ENCODE measurements at regions of chr3 and their contacts with region 1.

Region 1: DNA sequence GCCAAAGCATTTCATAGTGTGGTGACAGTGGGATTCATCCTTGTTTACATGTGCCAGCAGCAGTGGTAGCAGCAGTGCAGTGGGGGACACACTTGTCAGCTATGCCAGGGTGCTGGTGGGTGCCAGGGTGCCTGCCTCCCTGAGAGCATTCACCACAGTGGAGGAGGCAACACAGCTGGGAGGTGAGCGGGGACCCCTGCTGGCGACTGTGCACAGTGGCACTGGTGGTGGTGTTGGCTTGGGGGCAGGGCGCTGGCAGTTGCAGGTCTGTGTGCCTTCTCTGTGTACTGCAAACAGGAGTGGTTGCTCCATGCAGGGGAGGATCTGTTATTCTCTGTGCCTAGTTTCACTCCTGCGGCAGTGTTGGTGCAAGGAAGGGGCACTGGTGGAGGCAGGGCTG is 41.2 kb downstream of the CEP63 start:
- DNase-seq: peak in 1 of 9 experiments; percentile 7
- ATAC-seq: no peak
- H3K4me3 ChIP-seq: no peak overlapping the region
- H3K4me3 Mint-ChIP-seq: no peak overlapping the region
- H3K27ac ChIP-seq: no peak overlapping the region
- H3K27ac Mint-ChIP-seq: no peak overlapping the region
- H3K4me1 ChIP-seq: no peaks in the 10 kb centered on the region
- H3K4me1 Mint-ChIP-seq: peaks cover 8% of the 10 kb centered on the region
- H3K27me3 ChIP-seq: no peaks in the 10 kb centered on the region
- H3K27me3 Mint-ChIP-seq: no peaks in the 10 kb centered on the region
- CTCF ChIP-seq: no peak

Region 2: DNA sequence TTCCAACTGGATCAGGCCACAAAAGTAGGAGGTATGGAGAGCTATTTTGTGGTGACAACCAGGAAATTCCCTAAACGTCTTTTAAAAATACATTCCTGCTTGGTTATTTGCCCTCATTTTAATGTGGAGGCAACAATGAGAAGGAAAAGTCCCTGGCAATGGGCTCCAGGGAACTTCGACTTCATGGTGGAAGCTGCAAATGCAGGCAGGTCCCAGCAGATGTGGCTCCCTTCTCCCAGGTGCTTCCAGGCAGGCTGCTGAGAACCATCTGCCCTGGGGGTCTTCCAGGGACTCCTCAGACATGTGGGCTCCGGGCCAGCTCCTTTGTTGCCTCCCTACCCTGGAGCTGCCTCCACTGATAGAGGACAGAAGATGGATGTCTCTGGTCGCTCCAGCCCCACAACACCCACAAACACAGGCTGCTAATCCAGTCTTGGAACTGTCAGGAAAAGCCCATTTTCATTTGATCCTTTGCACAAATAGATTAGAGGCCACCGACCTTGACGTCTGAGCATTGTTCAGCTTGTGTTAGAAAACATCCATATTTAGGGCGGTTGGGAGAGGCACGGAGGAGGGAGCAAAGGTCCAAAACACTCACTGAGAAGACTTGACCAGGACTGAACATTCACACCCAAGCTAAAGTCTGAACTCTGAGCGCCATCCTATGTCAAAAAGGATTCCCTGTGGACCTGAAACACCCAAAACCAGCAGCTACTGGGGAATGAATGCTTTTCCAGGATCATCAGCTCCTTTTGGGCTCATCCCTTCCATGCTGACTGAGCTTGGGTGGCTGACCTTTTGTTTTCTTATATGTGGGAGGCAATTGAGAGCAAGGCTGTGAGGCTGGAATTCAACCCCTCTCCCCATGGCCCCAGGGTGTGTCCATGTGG is 467.1 kb before region 1 on chr3:
- CTCF ChIA-PET with region 1: no interaction called
- POLR2A ChIA-PET with region 1: no interaction called
- intact Hi-C with region 1: loop called in 1 of 2 experiments (anchors 5 kb)
- DNase-seq: no peak
- ATAC-seq: no peak
- H3K4me3 ChIP-seq: no peak overlapping the region
- H3K4me3 Mint-ChIP-seq: no peak overlapping the region
- H3K27ac ChIP-seq: no peak overlapping the region
- H3K27ac Mint-ChIP-seq: no peak overlapping the region
- H3K4me1 ChIP-seq: no peaks in the 10 kb centered on the region
- H3K4me1 Mint-ChIP-seq: peaks cover 4% of the 10 kb centered on the region
- H3K27me3 ChIP-seq: no peaks in the 10 kb centered on the region
- H3K27me3 Mint-ChIP-seq: peaks cover 2% of the 10 kb centered on the region
- CTCF ChIP-seq: no peak

Region 3: DNA sequence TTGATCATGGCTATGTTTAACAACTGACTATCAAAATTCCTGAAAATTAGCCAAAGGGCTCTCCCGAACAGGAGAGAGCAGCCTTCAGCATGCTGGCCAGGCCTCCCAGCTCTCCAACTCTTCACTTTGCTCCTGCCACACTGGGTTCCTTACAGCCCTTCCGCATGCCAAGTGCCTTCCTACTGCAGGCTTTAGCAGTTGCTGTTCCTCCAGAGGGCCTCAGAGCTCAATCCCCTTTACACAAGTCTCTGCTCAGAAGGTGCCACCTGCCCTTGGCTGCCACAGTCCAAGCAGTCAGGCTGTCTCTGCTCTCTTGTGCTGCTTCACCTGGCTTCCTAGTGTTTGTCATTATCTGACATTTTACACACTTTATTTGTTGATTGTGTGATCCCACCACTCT is 885.4 kb after region 1 on chr3:
- CTCF ChIA-PET with region 1: no interaction called
- POLR2A ChIA-PET with region 1: no interaction called
- intact Hi-C with region 1: no loop called
- DNase-seq: no peak
- ATAC-seq: no peak
- H3K4me3 ChIP-seq: no peak overlapping the region
- H3K4me3 Mint-ChIP-seq: no peak overlapping the region
- H3K27ac ChIP-seq: no peak overlapping the region
- H3K27ac Mint-ChIP-seq: no peak overlapping the region
- H3K4me1 ChIP-seq: no peaks in the 10 kb centered on the region
- H3K4me1 Mint-ChIP-seq: no peaks in the 10 kb centered on the region
- H3K27me3 ChIP-seq: no peaks in the 10 kb centered on the region
- H3K27me3 Mint-ChIP-seq: peaks cover 2% of the 10 kb centered on the region
- CTCF ChIP-seq: no peak